Calu3 (cell line): ENCODE measurements at regions of chr3 and their contacts with region 1.

Region 1: DNA sequence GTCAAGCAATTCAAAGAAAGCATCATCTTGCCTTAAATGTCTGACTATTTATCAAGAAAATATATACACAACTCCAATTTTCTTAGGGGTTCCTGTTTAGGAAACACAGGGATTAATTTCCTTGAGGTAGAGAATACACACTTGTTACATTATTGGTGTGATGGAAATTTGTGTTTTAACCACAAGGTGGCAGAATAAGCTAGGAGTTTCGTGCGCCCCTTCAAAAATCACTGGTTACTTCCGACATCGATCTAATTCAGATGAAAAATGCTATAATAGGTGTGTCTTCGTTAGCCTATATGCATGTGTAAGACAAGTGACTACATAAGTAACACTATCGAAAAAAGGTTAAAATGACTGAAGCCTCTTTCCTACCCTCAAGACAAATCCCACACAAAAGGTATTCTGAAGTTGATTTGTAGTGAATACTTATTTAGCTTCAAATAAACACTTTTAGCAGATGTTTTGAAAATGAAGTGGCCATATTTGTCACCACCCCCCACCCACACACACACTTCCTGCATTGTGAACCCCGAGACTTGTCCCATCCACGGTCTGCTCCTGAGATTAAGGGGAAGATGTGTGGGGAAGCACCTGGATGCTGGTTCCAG is 246.5 kb downstream of the ROBO1 start:
- DNase-seq: peak; percentile 45
- H3K4me3 Mint-ChIP-seq: no peak overlapping the region
- H3K27ac Mint-ChIP-seq: no peak overlapping the region
- H3K4me1 Mint-ChIP-seq: peaks cover 5% of the 10 kb centered on the region
- H3K27me3 Mint-ChIP-seq: no peaks in the 10 kb centered on the region
- CTCF ChIP-seq: peak; percentile 23

Region 2: GRCh38 chr3:79086514-79086913 is 434.8 kb before region 1 on chr3:
- CTCF ChIA-PET with region 1: interaction called, 10 read pairs
- intact Hi-C with region 1: no loop called
- DNase-seq: peak; percentile 60
- H3K4me3 Mint-ChIP-seq: no peak overlapping the region
- H3K27ac Mint-ChIP-seq: no peak overlapping the region
- H3K4me1 Mint-ChIP-seq: no peaks in the 10 kb centered on the region
- H3K27me3 Mint-ChIP-seq: no peaks in the 10 kb centered on the region
- CTCF ChIP-seq: peak; percentile 58

Region 3: DNA sequence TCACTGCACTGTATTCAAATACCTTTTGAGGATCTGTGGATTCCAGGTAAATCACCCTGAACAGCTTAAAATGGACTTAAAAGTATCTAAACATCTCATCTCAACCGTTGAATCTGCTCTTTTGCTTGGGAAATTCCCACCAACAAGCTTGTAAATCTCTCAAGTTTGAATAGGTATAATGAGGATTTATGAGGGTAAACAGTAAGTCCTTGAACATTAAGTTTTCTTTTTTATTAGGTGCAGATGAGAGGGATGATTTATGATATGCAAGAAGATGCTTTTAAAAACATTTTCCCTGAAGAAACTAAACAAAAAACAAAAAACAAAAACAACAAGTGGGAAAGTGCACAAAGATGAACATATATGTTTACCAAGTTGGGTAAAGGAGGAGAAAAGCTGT is 44.1 kb before region 1 on chr3:
- CTCF ChIA-PET with region 1: no interaction called
- intact Hi-C with region 1: no loop called
- DNase-seq: no peak
- H3K4me3 Mint-ChIP-seq: no peak overlapping the region
- H3K27ac Mint-ChIP-seq: no peak overlapping the region
- H3K4me1 Mint-ChIP-seq: no peaks in the 10 kb centered on the region
- H3K27me3 Mint-ChIP-seq: no peaks in the 10 kb centered on the region
- CTCF ChIP-seq: no peak

Region 4: GRCh38 chr3:79737530-79737929 is 216.2 kb after region 1 on chr3:
- CTCF ChIA-PET with region 1: no interaction called
- intact Hi-C with region 1: no loop called
- DNase-seq: no peak
- H3K4me3 Mint-ChIP-seq: no peak overlapping the region
- H3K27ac Mint-ChIP-seq: no peak overlapping the region
- H3K4me1 Mint-ChIP-seq: peaks cover 9% of the 10 kb centered on the region
- H3K27me3 Mint-ChIP-seq: no peaks in the 10 kb centered on the region
- CTCF ChIP-seq: no peak

Region 5: GRCh38 chr3:80000039-80000438 is 478.7 kb after region 1 on chr3:
- CTCF ChIA-PET with region 1: no interaction called
- intact Hi-C with region 1: loop called (anchors 10 kb)
- DNase-seq: no peak
- H3K4me3 Mint-ChIP-seq: no peak overlapping the region
- H3K27ac Mint-ChIP-seq: peak overlapping the region; percentile 76
- H3K4me1 Mint-ChIP-seq: peaks cover 8% of the 10 kb centered on the region
- H3K27me3 Mint-ChIP-seq: no peaks in the 10 kb centered on the region
- CTCF ChIP-seq: no peak

Region 6: GRCh38 chr3:80676866-80677265 is 1155.5 kb after region 1 on chr3:
- CTCF ChIA-PET with region 1: interaction called, 11 read pairs
- intact Hi-C with region 1: no loop called
- DNase-seq: no peak
- H3K4me3 Mint-ChIP-seq: no peak overlapping the region
- H3K27ac Mint-ChIP-seq: no peak overlapping the region
- H3K4me1 Mint-ChIP-seq: no peaks in the 10 kb centered on the region
- H3K27me3 Mint-ChIP-seq: no peaks in the 10 kb centered on the region
- CTCF ChIP-seq: no peak

Region 7: GRCh38 chr3:81242871-81243270 is 1721.5 kb after region 1 on chr3:
- CTCF ChIA-PET with region 1: no interaction called
- intact Hi-C with region 1: loop called (anchors 10 kb)
- DNase-seq: no peak
- H3K4me3 Mint-ChIP-seq: no peak overlapping the region
- H3K27ac Mint-ChIP-seq: no peak overlapping the region
- H3K4me1 Mint-ChIP-seq: no peaks in the 10 kb centered on the region
- H3K27me3 Mint-ChIP-seq: no peaks in the 10 kb centered on the region
- CTCF ChIP-seq: no peak